ENCODE measurements at regions of chr3 and their contacts with region 1.

Region 1: DNA sequence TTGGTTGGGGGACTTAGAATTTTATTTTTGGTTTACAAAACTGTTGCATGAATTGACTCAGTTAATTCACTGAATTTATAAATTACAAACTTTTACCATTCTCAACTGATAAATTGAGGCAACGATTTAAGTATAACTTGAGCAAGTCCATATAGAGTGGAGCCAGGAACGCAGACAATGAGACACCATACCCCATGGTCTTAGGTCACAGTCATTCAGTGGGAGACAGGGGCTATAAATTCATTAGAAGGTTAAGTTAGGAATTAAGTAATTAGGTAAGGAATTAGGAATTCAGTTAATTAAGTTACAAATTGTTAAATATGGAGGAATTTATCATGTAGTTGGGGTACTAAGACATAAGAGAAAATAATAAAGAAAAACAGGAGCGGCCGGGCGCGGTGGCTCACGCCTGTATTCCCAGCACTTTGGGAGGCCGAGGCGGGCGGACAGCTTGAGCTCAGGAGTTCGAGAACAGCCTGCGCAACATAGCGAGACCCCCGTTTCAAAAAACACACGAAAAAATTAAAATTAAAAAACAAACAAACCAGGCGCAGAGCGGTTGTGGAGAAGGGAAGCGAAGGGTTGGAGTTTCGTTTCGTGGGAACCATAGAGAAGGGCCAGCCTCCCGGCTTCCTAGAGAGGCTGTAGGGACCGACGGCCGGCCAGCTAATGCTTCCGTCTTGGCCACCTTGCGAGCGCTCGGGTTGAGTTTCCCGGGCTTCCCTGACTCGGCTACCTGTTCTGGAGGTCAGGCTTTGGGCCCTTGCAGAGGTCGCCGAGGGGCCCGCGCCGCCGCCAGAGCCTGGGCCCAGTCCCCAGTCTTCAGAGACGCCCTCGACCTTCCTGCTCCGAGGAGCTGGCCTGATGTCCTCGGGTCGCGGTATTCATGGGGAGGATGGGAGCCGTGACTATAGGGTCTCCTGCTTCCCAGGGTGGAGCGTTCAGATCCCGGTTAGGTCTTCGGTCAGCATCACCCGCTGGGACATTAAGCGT is at the start of gene ZNF619:
- DNase-seq: peak in 1 of 2 donors; percentile 85
- H3K4me3 ChIP-seq: peak within 1 kb of the TSS; percentile 65 to 96
- H3K27ac ChIP-seq: peak within 1 kb of the TSS; percentile 64 to 72
- H3K4me1 ChIP-seq: peaks cover 0 to 7% of the 10 kb centered on the region in 2 donors
- H3K27me3 ChIP-seq: no peaks in the 10 kb centered on the region
- CTCF ChIP-seq: no peak
- total RNA-seq, gene ZNF619: 1.4 TPM

Region 2: DNA sequence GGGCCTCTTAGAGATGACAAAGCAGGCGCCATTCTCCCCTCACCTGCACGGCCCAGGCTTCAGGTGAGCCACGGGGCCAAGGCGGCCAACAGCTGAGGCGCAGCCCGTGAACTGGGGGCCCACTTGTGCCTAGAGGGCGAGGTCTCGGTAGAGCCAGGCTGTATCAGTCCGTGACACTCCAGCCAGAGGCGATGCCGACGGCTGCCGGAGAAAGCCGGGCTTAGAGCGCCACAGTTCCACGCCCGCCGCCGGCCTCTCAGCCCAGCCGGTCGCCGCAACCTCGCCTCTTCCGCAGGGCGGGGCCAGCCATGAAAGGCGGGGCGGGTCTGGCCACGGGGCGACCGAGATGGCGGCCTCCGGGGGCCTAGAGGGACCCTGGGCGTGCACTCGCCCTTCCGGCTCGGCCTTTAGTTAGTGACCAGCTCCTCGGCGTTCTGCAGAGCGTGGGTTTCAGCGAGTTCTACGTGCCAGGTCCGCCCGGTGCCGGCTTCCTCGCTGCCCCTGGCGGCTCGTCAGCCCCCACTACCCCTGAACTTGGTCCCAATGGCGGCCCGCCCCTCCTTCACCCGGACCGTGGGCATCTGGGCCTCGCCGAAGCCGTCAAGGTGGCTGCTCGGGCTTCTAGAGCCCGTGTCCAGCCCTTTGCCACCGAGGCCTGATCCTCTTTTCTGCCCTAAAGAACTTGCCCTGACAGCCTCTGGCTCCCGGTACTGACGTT is 48.0 kb after region 1 on chr3 and contains the start of gene ZNF621:
- intact Hi-C with region 1: loop called (anchors 2 kb)
- DNase-seq: peak; percentile 57 to 94
- H3K4me3 ChIP-seq: peak within 1 kb of the TSS; percentile 83 to 88
- H3K27ac ChIP-seq: peak within 1 kb of the TSS; percentile 79 to 91
- H3K4me1 ChIP-seq: peaks cover 0 to 7% of the 10 kb centered on the region in 2 donors
- H3K27me3 ChIP-seq: no peaks in the 10 kb centered on the region
- CTCF ChIP-seq: no peak
- total RNA-seq, gene ZNF621: 8.2 TPM

Measured in ascending aorta (tissue), 2 donors.